Panc1 (cell line): ENCODE measurements at regions of chr3 and their contacts with region 1.

Region 1: GRCh38 chr3:194556086-194557056 is 69.6 kb upstream of the ATP13A3 start:
- DNase-seq: no peak
- ATAC-seq: peak; percentile 65
- H3K4me3 ChIP-seq: peak overlapping the region in 1 of 2 experiments; percentile 28; a peak in 2 of 4 replicates
- H3K27ac ChIP-seq: peak overlapping the region; percentile 77
- H3K4me1 ChIP-seq: peaks cover 16% of the 10 kb centered on the region
- H3K27me3 ChIP-seq: no peaks in the 10 kb centered on the region
- CTCF ChIP-seq: no peak

Region 2: GRCh38 chr3:194583604-194584318 is 27.4 kb after region 1 on chr3:
- CTCF ChIA-PET with region 1: interaction called, 11 read pairs
- POLR2A ChIA-PET with region 1: no interaction called
- in situ Hi-C with region 1: no loop called
- intact Hi-C with region 1: no loop called
- DNase-seq: no peak
- ATAC-seq: peak; percentile 92
- H3K4me3 ChIP-seq: peak overlapping the region; percentile 74 to 93
- H3K27ac ChIP-seq: peak overlapping the region; percentile 98
- H3K4me1 ChIP-seq: peaks cover 26% of the 10 kb centered on the region
- H3K27me3 ChIP-seq: no peaks in the 10 kb centered on the region
- CTCF ChIP-seq: no peak